Gastrocnemius medialis (tissue), 4 donors: ENCODE measurements at regions of chr12 and their contacts with region 1.

Region 1: GRCh38 chr12:93243689-93244513 is 133.8 kb upstream of the NUDT4 start:
- DNase-seq: peak in 1 of 2 donors; percentile 45
- ATAC-seq: peak; percentile 85 to 92
- H3K4me3 ChIP-seq: no peak overlapping the region
- H3K27ac ChIP-seq: peak overlapping the region; percentile 42 to 71 (median 52)
- H3K4me1 ChIP-seq: peaks cover 14 to 17% of the 10 kb centered on the region in 2 donors
- H3K27me3 ChIP-seq: no peaks in the 10 kb centered on the region
- CTCF ChIP-seq: no peak
- POLR2A ChIP-seq: peak in 1 of 2 donors; percentile 10

Region 2: DNA sequence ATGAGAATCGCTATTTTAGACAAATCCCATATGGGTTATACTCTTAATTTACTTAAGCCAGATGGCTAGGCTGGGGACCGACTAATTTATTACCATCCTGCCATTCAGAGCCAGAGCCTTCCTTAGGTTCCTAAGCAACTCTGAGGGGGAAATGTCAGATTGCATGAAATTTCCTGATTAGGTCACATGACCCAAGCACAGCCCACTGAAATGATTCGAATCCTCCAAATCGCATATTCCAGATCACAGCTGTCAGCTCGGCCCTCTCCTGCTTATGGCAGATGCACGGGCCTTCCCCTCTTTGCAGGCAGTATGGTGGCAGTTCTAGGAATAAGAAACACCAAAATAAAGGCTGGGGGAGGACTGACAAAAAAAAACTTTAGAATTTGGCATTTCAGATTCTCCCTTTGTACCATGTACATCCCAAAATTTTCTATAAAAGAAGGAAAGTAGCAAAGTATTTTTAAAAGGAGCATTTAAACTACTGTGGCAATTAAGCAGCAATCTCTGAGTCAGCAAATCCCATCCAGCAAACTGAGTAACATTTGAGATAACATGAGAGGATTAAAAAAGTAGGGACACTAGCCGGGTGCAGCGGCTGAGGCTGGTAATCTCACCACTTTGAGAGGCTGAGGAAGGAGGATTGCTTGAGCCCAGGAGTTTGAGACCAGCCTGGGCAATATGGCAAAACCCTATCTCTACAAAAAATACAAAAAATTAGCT is 103.3 kb after region 1 on chr12:
- in situ Hi-C with region 1: no loop called
- intact Hi-C with region 1: no loop called
- DNase-seq: no peak
- ATAC-seq: no peak
- H3K4me3 ChIP-seq: no peak overlapping the region
- H3K27ac ChIP-seq: no peak overlapping the region
- H3K4me1 ChIP-seq: no peaks in the 10 kb centered on the region
- H3K27me3 ChIP-seq: no peaks in the 10 kb centered on the region
- CTCF ChIP-seq: no peak
- POLR2A ChIP-seq: no peak

Region 3: GRCh38 chr12:93361151-93361919 is 117.4 kb after region 1 on chr12:
- in situ Hi-C with region 1: no loop called
- intact Hi-C with region 1: loop called (anchors 5 kb)
- DNase-seq: peak; percentile 77 to 80
- ATAC-seq: peak; percentile 99 to 100
- H3K4me3 ChIP-seq: no peak overlapping the region
- H3K27ac ChIP-seq: peak overlapping the region; percentile 43 to 83 (median 76)
- H3K4me1 ChIP-seq: peaks cover 18 to 22% of the 10 kb centered on the region in 2 donors
- H3K27me3 ChIP-seq: no peaks in the 10 kb centered on the region
- CTCF ChIP-seq: no peak
- POLR2A ChIP-seq: peak in 1 of 2 donors; percentile 16

Region 4: GRCh38 chr12:93387780-93388179 is 143.9 kb after region 1 on chr12:
- in situ Hi-C with region 1: no loop called
- intact Hi-C with region 1: no loop called
- DNase-seq: no peak
- ATAC-seq: no peak
- H3K4me3 ChIP-seq: no peak overlapping the region
- H3K27ac ChIP-seq: peak overlapping the region in 1 of 4 donors; percentile 22
- H3K4me1 ChIP-seq: peaks cover 21 to 53% of the 10 kb centered on the region in 2 donors
- H3K27me3 ChIP-seq: no peaks in the 10 kb centered on the region
- CTCF ChIP-seq: no peak
- POLR2A ChIP-seq: no peak

Region 5: DNA sequence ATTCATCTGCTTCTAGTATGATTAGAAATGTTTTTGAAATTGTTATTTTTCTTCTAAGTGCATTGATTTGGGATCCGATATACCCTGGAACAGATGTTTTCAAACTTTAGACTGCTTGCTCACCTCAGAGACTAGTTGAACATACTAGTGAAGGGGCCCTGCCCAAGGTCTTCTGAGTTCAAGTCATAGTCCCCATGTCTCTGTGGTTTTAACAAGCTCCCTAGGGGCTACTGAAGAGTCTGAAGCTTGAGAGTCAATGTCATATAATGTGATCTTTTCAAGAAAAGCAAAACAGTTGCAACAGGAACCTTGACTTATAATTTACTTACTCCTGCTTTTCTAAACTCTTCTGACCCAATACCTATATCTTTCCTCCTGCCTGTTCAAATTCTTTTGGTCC is 205.4 kb after region 1 on chr12:
- in situ Hi-C with region 1: no loop called
- intact Hi-C with region 1: no loop called
- DNase-seq: no peak
- ATAC-seq: no peak
- H3K4me3 ChIP-seq: no peak overlapping the region
- H3K27ac ChIP-seq: no peak overlapping the region
- H3K4me1 ChIP-seq: peaks cover 2 to 6% of the 10 kb centered on the region in 2 donors
- H3K27me3 ChIP-seq: no peaks in the 10 kb centered on the region
- CTCF ChIP-seq: no peak
- POLR2A ChIP-seq: no peak